ENCODE measurements at regions of chr20 and their contacts with region 1.

Region 1: GRCh38 chr20:31712564-31713311 is 9.9 kb downstream of the BCL2L1 start:
- DNase-seq: peak; percentile 87 to 98
- H3K4me3 ChIP-seq: peak overlapping the region; percentile 18 to 53
- H3K27ac ChIP-seq: peak overlapping the region; percentile 95 to 98
- H3K4me1 ChIP-seq: peaks cover 28 to 81% of the 10 kb centered on the region in 2 donors
- H3K27me3 ChIP-seq: no peaks in the 10 kb centered on the region
- CTCF ChIP-seq: no peak

Region 2: GRCh38 chr20:31637660-31638059 is 75.1 kb before region 1 on chr20 and contains the start of gene COX4I2:
- intact Hi-C with region 1: no loop called
- DNase-seq: no peak
- H3K4me3 ChIP-seq: peak within 1 kb of the TSS in 1 of 2 donors; percentile 16
- H3K27ac ChIP-seq: no peak within 1 kb of the TSS
- H3K4me1 ChIP-seq: no peaks in the 10 kb centered on the region
- H3K27me3 ChIP-seq: no peaks in the 10 kb centered on the region
- CTCF ChIP-seq: no peak
- total RNA-seq, gene COX4I2: 61.4 TPM

Region 3: GRCh38 chr20:31698803-31699718 is 13.7 kb before region 1 on chr20:
- intact Hi-C with region 1: loop called (anchors 1 kb)
- DNase-seq: peak; percentile 69 to 91
- H3K4me3 ChIP-seq: no peak overlapping the region
- H3K27ac ChIP-seq: peak overlapping the region; percentile 86 to 96
- H3K4me1 ChIP-seq: peaks cover 19 to 61% of the 10 kb centered on the region in 2 donors
- H3K27me3 ChIP-seq: no peaks in the 10 kb centered on the region
- CTCF ChIP-seq: no peak

Region 4: DNA sequence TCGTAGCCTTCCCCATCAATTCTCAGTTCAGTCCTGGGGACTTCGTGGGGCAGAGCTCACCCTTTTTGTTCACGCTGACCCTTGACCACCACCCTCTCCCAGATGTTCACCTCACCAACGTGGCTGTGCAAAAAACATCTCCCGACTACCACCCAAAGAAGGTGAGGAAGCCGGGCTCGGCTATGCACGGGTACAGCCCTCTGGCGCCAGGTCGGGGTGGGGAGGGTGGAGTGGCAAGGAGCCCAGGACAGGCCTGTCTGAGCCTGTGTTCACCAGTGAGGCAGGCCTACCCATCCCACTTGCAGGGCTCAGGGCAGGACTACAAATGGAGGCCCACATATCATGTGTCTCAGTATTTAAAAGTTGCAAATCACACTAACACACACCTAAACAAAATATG is 221.0 kb after region 1 on chr20:
- intact Hi-C with region 1: no loop called
- DNase-seq: no peak
- H3K4me3 ChIP-seq: no peak overlapping the region
- H3K27ac ChIP-seq: no peak overlapping the region
- H3K4me1 ChIP-seq: no peaks in the 10 kb centered on the region
- H3K27me3 ChIP-seq: no peaks in the 10 kb centered on the region
- CTCF ChIP-seq: no peak

Measured in ascending aorta (tissue), 2 donors.